MCF 10A (cell line): ENCODE measurements at regions of chr14 and their contacts with region 1.

Region 1: DNA sequence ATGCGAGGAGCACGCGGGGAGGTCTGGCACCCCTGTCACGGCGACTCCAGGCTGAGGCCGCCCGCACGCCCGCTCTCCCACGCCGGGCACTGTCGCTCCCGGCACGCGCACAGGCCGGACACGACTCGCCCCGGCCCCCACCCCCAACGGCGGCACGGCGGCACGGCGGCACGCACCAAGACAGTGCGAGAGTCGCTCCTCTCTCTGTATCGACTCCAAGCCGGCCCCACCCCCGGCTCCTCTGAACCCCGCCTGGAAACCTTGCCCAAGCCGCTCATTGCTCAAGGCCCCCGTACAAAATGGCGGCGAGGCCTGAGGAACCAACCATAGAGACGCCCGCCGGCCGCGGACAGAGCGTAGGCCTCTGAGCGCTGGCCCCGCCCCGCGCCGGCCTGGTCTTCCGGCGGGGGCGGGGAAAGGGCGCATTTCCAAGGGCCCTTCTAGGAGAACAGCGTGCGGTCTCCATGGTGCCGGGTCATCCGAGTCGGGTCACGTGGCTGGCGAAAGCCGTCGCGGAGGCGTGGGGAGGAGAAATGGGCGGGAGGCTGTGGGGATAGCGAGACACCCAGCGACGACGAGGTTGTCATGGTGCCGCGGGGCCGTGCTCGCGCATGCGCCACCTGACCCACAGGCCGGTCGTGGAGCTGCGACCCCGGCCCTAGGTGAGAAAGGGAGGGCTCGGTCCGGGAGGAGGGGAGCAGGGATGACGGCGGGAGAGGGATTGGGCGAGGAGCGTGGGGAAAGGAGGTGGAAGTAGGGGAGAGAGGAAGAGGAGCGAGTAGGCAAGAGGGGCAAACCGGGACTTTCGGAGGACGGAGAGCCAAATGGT is at the start of gene CIPC:
- DNase-seq: peak; percentile 99
- H3K4me3 Mint-ChIP-seq: peak within 1 kb of the TSS; percentile 98
- H3K27ac Mint-ChIP-seq: peak within 1 kb of the TSS; percentile 99
- H3K4me1 Mint-ChIP-seq: peaks cover 43% of the 10 kb centered on the region
- H3K27me3 Mint-ChIP-seq: no peaks in the 10 kb centered on the region
- CTCF ChIP-seq: no peak
- total RNA-seq, gene CIPC: 9.7 and 11.4 TPM in 2 replicates

Region 2: DNA sequence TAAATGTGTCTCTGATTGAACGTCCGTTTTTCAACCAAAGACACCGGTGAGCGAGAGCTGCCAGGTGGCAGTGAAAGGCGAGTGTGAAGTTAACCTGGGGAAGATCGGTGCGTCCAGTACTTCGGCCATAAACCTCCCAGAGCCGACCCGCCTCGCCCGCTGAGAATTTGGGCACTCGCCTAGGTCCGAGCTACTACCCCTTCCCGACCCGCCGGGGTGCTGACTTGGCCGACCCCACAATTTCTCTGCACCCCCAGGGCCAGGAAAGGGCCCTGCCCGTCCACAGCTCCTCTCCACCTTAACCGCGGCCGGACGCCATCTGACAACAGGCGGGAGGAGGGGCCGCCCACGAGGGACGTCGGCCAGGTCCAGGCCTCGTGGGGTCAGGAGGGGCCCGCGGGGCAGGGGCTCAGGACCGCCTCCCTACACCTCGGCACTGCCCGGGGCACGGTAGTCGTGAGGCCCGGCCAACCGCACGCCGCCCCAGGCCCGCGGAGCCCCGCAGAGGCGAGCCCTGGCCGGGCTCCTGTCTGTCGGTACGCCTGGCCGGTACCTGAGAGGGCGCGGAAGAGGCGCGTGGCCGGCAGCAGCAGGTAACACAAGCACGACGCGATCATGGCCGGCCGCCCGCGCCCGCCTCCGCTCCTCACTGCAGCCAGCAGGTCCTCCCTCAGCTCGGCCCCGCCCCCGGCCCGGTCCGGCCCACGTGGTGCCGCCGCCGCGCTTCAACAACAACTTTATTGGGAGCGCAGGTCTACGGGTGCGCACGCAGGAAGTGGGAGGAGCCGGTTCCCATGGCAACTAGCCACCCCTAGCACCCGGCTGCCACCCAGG is 285.5 kb before region 1 on chr14 and contains the start of gene ANGEL1:
- CTCF ChIA-PET with region 1: interaction called, 3 read pairs
- POLR2A ChIA-PET with region 1: interaction called, 15 read pairs
- intact Hi-C with region 1: no loop called
- DNase-seq: peak; percentile 96
- H3K4me3 Mint-ChIP-seq: peak within 1 kb of the TSS; percentile 97
- H3K27ac Mint-ChIP-seq: peak within 1 kb of the TSS; percentile 91
- H3K4me1 Mint-ChIP-seq: peaks cover 14% of the 10 kb centered on the region
- H3K27me3 Mint-ChIP-seq: no peaks in the 10 kb centered on the region
- CTCF ChIP-seq: no peak
- total RNA-seq, gene ANGEL1: 14.5 and 21.3 TPM in 2 replicates

Region 3: GRCh38 chr14:76904740-76905438 is 193.0 kb before region 1 on chr14:
- CTCF ChIA-PET with region 1: interaction called, 4 read pairs
- POLR2A ChIA-PET with region 1: interaction called, 14 read pairs
- intact Hi-C with region 1: no loop called
- DNase-seq: peak; percentile 99
- H3K4me3 Mint-ChIP-seq: peak overlapping the region; percentile 55
- H3K27ac Mint-ChIP-seq: peak overlapping the region; percentile 57
- H3K4me1 Mint-ChIP-seq: peaks cover 29% of the 10 kb centered on the region
- H3K27me3 Mint-ChIP-seq: no peaks in the 10 kb centered on the region
- CTCF ChIP-seq: no peak

Region 4: DNA sequence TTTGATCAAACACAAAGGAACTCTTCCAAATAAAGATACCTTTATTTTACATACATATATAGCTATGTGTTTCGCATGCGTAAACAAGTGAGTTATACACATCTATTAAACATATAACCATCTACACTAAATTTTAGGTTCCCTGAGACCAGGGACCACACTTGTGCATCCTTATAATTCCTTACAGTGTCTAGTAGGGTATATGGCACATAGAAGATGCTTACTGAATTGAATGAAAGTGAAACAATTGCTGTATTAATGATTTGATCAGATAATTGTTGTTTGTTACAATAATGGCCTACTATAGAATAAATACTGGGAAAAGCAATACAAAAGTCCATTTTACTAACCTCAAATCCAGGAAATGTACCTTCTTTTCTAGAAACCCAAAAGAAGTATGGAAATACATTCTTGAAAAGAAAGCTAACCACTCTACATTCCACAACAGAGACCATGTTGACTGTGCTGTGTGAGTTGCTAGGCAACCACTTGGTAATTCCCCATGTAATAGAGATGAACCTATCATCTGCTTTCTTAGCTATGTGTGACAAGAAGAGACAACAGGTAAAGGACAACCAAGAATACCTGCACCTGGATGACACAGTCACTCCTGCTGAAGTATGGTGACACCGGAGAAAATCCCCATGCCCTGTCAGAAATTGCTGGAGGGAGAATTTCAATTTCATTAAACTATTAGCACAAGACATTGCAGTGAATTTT is 11.7 kb before region 1 on chr14:
- CTCF ChIA-PET with region 1: interaction called, 26 read pairs
- POLR2A ChIA-PET with region 1: interaction called, 3 read pairs
- intact Hi-C with region 1: no loop called
- DNase-seq: no peak
- H3K4me3 Mint-ChIP-seq: no peak overlapping the region
- H3K27ac Mint-ChIP-seq: no peak overlapping the region
- H3K4me1 Mint-ChIP-seq: peaks cover 6% of the 10 kb centered on the region
- H3K27me3 Mint-ChIP-seq: no peaks in the 10 kb centered on the region
- CTCF ChIP-seq: no peak

Region 5: GRCh38 chr14:77124345-77125280 is 26.7 kb after region 1 on chr14:
- CTCF ChIA-PET with region 1: interaction called, 18 read pairs
- POLR2A ChIA-PET with region 1: interaction called, 54 read pairs
- intact Hi-C with region 1: no loop called
- DNase-seq: no peak
- H3K4me3 Mint-ChIP-seq: no peak overlapping the region
- H3K27ac Mint-ChIP-seq: no peak overlapping the region
- H3K4me1 Mint-ChIP-seq: peaks cover 33% of the 10 kb centered on the region
- H3K27me3 Mint-ChIP-seq: no peaks in the 10 kb centered on the region
- CTCF ChIP-seq: no peak